Activated CD4-positive, alpha-beta T cell treated with anti-CD3 and anti-CD28 coated beads, Interleukin-2, amount 10 ng/mL, durations not matched to agents 24 days and 14 days (primary cell): ENCODE measurements at regions of chr3 and their contacts with region 1.

Region 1: DNA sequence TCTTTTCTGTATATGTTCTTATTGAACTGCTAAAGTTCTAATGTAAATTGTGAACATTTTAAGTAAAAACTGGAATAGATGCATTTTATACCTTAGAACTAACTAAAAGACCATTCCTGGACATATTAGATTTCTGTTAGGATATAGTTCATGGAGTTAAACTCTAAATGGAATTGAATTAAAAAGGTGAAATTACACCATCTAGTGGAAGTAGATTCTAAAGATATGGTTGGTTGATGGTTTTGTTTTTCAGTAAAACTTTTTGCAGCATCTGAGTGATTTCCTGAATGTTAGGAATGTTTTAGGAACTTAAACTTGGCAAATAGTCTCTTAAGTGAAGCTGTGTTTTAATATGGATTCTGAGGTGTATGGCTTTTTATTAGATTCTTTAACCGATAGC is 96.8 kb downstream of the SLMAP start:
- DNase-seq: no peak
- H3K4me3 Mint-ChIP-seq: no peak overlapping the region
- H3K27ac Mint-ChIP-seq: no peak overlapping the region
- H3K4me1 Mint-ChIP-seq: no peaks in the 10 kb centered on the region
- H3K27me3 Mint-ChIP-seq: no peaks in the 10 kb centered on the region

Region 2: DNA sequence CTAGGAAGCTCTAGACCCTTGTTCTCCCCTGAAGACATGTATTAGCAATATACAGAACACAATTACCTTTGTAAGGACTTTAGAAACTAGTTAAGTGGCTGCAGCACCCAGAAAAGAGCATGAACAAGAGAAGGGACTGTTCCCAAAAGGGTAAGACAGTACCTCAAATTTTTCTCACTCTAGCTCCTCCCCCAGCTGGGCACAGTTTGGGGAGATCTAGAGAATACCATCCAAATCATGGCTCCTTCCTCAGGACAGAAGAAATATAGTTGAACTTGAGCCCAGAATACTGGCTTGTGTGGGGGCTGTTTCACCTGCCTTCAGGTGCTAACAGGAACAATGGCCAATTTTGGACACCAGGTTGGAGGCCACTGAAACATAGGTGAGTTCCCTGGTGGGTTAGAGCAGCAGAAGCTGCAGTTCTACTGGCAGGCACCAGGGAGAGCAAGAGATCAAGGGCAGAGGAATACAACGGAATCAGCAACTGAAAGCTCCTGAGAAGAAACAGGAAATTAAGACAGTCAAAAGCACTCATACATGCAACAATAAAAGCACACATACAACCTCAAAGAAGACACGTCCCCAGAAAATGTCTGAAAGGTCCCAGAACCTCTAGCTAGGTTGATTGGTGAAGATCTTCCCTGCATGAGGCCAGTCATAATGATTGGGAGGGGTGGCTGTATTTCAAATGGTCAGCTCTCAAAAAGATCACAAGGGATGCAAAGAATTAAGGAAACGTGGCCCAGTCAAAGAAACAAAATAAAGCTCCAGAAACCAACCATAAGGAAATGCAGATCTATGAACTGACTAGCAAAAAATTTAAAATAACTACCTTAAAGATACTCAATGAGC is 455.5 kb before region 1 on chr3:
- intact Hi-C with region 1: loop called (anchors 5 kb)
- DNase-seq: peak; percentile 90
- H3K4me3 Mint-ChIP-seq: no peak overlapping the region
- H3K27ac Mint-ChIP-seq: peak overlapping the region; percentile 14
- H3K4me1 Mint-ChIP-seq: peaks cover 11% of the 10 kb centered on the region
- H3K27me3 Mint-ChIP-seq: peaks cover 18% of the 10 kb centered on the region

Region 3: DNA sequence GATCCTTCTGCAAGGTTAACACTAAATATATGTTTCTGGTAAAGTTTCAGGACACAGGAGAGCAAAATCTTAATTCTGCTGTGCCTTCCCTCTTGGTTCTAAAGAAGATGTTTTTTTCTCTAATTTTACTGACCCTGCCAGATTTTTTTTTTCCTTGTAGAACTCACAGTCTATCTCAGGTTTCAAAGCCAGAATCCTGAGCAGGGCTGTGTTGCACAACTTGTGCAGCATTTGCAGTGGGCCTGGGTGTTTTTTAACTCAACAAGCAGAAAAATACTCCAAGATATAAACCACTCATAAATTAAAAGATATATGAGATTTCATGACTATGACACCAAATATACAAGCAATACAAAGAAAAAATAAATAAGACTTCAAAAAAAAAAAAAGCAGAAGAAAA is 215.5 kb before region 1 on chr3:
- intact Hi-C with region 1: loop called (anchors 10 kb)
- DNase-seq: no peak
- H3K4me3 Mint-ChIP-seq: no peak overlapping the region
- H3K27ac Mint-ChIP-seq: no peak overlapping the region
- H3K4me1 Mint-ChIP-seq: peaks cover 2% of the 10 kb centered on the region
- H3K27me3 Mint-ChIP-seq: no peaks in the 10 kb centered on the region